A673 (cell line): ENCODE measurements at regions of chr5 and their contacts with region 1.

Region 1: GRCh38 chr5:54719384-54720283 is 202.1 kb downstream of the SNX18 start:
- DNase-seq: peak; percentile 98
- H3K4me3 ChIP-seq: peak overlapping the region; percentile 18
- H3K27ac ChIP-seq: peak overlapping the region; percentile 99
- H3K4me1 ChIP-seq: peaks cover 67% of the 10 kb centered on the region
- H3K27me3 ChIP-seq: no peaks in the 10 kb centered on the region
- CTCF ChIP-seq: no peak

Region 2: DNA sequence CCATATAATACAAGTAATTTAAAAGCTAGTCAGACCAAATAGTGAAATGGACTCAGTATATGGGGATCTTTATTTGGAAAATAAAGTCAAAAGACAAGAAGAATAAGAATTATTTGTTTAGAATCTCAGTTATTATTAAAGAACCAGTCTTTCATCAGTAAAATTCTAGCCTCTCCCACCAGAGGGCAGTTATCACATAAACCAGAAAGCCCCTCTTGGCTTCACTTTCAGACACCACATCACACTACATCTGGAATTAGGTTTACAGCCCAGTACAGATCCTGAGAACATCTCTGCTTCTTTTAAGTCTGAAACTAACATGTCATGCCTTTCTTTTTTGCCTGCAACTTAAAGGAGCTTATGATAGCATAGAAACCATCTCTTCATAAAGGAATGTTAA is 276.4 kb before region 1 on chr5:
- CTCF ChIA-PET with region 1: no interaction called
- POLR2A ChIA-PET with region 1: no interaction called
- intact Hi-C with region 1: loop called (anchors 5 kb)
- DNase-seq: peak; percentile 71
- H3K4me3 ChIP-seq: no peak overlapping the region
- H3K27ac ChIP-seq: no peak overlapping the region
- H3K4me1 ChIP-seq: peaks cover 6% of the 10 kb centered on the region
- H3K27me3 ChIP-seq: no peaks in the 10 kb centered on the region
- CTCF ChIP-seq: peak; percentile 66

Region 3: GRCh38 chr5:54492178-54492577 is 227.5 kb before region 1 on chr5:
- CTCF ChIA-PET with region 1: no interaction called
- POLR2A ChIA-PET with region 1: no interaction called
- intact Hi-C with region 1: no loop called
- DNase-seq: peak; percentile 17
- H3K4me3 ChIP-seq: no peak overlapping the region
- H3K27ac ChIP-seq: no peak overlapping the region
- H3K4me1 ChIP-seq: peaks cover 5% of the 10 kb centered on the region
- H3K27me3 ChIP-seq: no peaks in the 10 kb centered on the region
- CTCF ChIP-seq: no peak

Region 4: GRCh38 chr5:54658014-54658413 is 61.6 kb before region 1 on chr5:
- CTCF ChIA-PET with region 1: no interaction called
- POLR2A ChIA-PET with region 1: no interaction called
- intact Hi-C with region 1: loop called (anchors 1 kb)
- DNase-seq: peak; percentile 85
- H3K4me3 ChIP-seq: no peak overlapping the region
- H3K27ac ChIP-seq: no peak overlapping the region
- H3K4me1 ChIP-seq: peaks cover 34% of the 10 kb centered on the region
- H3K27me3 ChIP-seq: no peaks in the 10 kb centered on the region
- CTCF ChIP-seq: no peak

Region 5: DNA sequence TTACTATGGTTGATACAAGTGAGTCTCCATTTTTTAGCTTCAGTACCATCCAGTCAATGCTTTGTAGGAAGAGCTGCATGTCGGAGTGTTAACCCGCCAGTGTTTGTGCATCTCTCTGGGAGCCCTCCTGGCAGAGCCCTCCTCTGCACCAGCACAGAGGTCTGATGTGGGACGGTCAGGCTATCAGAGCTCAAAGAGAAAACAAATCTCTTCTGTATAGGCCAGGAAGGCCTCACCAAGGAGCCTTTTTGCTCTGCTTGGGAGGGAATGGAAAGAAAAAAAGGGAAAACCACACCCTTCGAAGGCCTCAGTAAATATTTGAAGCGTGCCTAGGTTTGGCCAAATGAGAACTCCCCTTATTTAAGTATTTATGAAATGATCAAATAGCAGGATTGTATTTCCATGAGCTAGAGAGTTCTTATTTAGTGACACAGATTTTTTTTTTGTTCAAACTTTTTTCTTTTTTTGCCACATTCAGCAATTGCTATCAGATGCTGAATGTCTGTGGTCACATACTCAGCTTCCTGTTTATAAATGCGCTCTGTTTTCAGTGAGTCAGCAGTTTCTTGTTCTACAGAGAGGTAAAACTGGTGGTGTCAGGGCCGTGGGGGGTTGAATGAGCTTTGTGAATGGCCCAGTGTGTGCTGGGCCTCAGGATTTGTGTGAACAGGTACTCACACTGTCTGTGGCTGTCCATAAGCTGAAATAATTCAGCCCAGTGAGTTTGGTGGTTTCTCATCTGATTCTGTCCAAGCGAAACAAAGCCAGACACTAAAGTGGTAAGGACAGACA is 24.6 kb after region 1 on chr5:
- CTCF ChIA-PET with region 1: no interaction called
- POLR2A ChIA-PET with region 1: interaction called, 12 read pairs
- intact Hi-C with region 1: no loop called
- DNase-seq: peak; percentile 74
- H3K4me3 ChIP-seq: no peak overlapping the region
- H3K27ac ChIP-seq: peak overlapping the region; percentile 75
- H3K4me1 ChIP-seq: peaks cover 25% of the 10 kb centered on the region
- H3K27me3 ChIP-seq: no peaks in the 10 kb centered on the region
- CTCF ChIP-seq: no peak

Region 6: DNA sequence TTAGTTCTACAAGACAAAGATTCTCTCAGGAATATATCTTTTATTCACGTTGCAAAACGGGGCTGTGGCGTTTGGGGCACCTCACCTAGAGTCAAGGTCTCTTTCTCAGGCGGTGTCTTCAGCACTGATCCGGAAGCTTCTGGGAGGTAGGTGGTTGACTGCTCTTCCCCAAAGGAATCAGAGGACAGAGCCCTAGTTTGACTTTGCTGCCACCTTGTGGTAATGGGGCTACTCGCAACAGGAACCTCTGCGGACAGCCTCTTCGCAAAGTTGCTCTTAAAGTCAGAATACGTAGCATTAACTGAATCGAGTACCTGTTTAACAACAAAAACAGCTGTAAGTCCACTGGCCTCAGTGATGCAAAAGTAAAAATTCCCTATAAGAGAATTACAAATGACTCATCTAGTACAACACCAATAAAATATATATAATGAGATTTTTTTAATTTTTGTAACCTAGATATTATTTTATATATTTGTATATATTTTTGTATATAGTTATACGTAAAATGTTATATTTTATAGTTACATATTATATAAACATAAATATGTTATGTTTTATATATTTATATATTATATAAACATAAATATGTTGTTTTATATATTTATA is 427.0 kb after region 1 on chr5:
- CTCF ChIA-PET with region 1: no interaction called
- POLR2A ChIA-PET with region 1: no interaction called
- intact Hi-C with region 1: no loop called
- DNase-seq: peak; percentile 91
- H3K4me3 ChIP-seq: no peak overlapping the region
- H3K27ac ChIP-seq: no peak overlapping the region
- H3K4me1 ChIP-seq: no peaks in the 10 kb centered on the region
- H3K27me3 ChIP-seq: peaks cover 27% of the 10 kb centered on the region
- CTCF ChIP-seq: peak; percentile 94

Region 7: DNA sequence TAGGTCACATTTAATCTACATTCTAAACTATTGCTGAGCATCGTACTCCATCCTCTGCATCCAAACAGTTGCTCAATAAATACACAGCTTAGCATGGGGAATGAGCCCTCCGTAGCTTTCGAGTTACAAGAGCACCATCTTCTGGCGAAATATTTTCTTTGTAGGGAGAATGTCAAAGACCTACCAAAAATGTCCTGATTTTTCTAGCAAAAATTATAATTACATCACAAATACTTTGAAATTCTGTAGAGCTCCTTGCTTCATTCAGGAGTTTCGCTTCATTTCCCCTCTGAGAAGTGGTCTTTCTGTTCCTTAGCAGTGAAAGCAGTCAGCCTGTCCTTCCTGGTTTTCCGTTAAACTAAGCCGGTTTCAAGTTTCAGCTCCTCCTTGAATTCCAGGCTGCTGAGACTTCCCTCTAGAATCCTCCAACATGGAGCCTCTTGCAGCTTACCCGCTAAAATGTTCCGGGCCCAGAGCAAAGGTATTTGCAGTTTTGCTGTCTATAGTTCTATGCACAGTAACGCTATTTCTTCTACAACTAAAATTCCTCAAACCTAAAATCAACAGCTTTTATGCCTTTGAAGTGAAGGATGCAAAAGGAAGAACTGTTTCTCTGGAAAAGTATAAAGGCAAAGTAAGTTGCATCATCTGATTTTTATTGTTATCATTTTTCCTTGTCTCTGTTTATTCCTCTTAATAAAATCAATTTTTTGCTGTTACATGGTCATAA is 440.3 kb after region 1 on chr5 and contains the start of gene GPX8:
- CTCF ChIA-PET with region 1: no interaction called
- POLR2A ChIA-PET with region 1: no interaction called
- intact Hi-C with region 1: loop called (anchors 10 kb)
- DNase-seq: peak; percentile 89
- H3K4me3 ChIP-seq: peak within 1 kb of the TSS; percentile 62
- H3K27ac ChIP-seq: peak within 1 kb of the TSS; percentile 87
- H3K4me1 ChIP-seq: peaks cover 6% of the 10 kb centered on the region
- H3K27me3 ChIP-seq: no peaks in the 10 kb centered on the region
- CTCF ChIP-seq: peak; percentile 83
- total RNA-seq, gene GPX8: 52.2 and 54.7 TPM in 2 replicates